Thyroid gland (tissue), 4 donors: ENCODE measurements at regions of chr6 and their contacts with region 1.

Region 1: GRCh38 chr6:29887819-29888776 is 54.2 kb upstream of the HLA-A start:
- DNase-seq: peak; percentile 66 to 89
- H3K4me3 ChIP-seq: peak overlapping the region in 2 of 3 donors; percentile 58 to 71
- H3K27ac ChIP-seq: peak overlapping the region in 2 of 3 donors; percentile 96 to 97
- H3K4me1 ChIP-seq: peaks cover 0 to 10% of the 10 kb centered on the region in 2 donors
- H3K27me3 ChIP-seq: no peaks in the 10 kb centered on the region
- CTCF ChIP-seq: no peak
- POLR2A ChIP-seq: no peak

Region 2: DNA sequence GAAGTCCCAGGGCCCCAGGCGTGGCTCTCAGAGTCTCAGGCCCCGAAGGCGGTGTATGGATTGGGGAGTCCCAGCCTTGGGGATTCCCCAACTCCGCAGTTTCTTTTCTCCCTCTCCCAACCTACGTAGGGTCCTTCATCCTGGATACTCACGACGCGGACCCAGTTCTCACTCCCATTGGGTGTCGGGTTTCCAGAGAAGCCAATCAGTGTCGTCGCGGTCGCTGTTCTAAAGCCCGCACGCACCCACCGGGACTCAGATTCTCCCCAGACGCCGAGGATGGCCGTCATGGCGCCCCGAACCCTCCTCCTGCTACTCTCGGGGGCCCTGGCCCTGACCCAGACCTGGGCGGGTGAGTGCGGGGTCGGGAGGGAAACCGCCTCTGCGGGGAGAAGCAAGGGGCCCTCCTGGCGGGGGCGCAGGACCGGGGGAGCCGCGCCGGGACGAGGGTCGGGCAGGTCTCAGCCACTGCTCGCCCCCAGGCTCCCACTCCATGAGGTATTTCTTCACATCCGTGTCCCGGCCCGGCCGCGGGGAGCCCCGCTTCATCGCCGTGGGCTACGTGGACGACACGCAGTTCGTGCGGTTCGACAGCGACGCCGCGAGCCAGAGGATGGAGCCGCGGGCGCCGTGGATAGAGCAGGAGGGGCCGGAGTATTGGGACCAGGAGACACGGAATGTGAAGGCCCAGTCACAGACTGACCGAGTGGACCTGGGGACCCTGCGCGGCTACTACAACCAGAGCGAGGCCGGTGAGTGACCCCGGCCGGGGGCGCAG is 54.4 kb after region 1 on chr6 and contains the start of gene HLA-A:
- intact Hi-C with region 1: no loop called
- DNase-seq: peak; percentile 92 to 95
- H3K4me3 ChIP-seq: peak within 1 kb of the TSS in 2 of 3 donors; percentile 15 to 71
- H3K27ac ChIP-seq: peak within 1 kb of the TSS; percentile 84 to 87 (median 84)
- H3K4me1 ChIP-seq: peaks cover 0 to 9% of the 10 kb centered on the region in 2 donors
- H3K27me3 ChIP-seq: no peaks in the 10 kb centered on the region
- CTCF ChIP-seq: no peak
- POLR2A ChIP-seq: peak; percentile 69 to 96
- total RNA-seq, gene HLA-A: 398 to 842 (median 578) TPM

Region 3: GRCh38 chr6:29974901-29975560 is 86.9 kb after region 1 on chr6:
- intact Hi-C with region 1: loop called (anchors 5 kb)
- DNase-seq: peak; percentile 20 to 31
- H3K4me3 ChIP-seq: peak overlapping the region in 2 of 3 donors; percentile 2 to 29
- H3K27ac ChIP-seq: peak overlapping the region in 2 of 3 donors; percentile 24 to 32
- H3K4me1 ChIP-seq: peaks cover 13 to 22% of the 10 kb centered on the region in 2 donors
- H3K27me3 ChIP-seq: no peaks in the 10 kb centered on the region
- CTCF ChIP-seq: no peak
- POLR2A ChIP-seq: no peak

Region 4: DNA sequence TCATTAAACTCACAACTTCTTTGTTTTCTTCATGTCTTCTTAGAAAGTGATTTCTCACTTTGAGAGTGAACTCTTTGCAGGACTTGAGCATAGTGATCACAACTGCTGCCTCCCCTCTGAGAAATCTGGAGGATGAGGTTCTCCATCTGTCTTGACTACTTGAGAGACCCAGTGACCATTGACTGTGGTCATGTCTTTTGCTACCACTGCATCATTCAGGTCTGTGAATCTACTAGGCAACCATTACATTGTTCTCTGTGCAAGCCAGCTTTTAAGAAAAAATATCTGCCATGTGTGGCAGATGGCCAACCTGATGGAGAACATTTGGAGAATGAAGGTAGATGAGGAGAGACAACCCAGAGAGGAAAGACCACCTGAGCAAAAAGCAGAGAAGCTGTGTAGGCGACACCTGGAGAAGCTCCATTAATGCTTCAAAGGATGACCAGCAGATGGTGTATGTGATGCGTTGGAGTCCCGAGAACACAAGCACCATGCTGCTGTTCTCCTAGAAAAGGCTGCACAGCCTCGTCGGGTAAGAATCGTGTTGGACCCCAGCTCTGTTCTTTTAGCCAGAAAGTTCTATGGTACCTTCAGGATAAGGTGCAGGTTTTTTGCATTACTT is 350.2 kb after region 1 on chr6:
- intact Hi-C with region 1: no loop called
- DNase-seq: no peak
- H3K4me3 ChIP-seq: no peak overlapping the region
- H3K27ac ChIP-seq: no peak overlapping the region
- H3K4me1 ChIP-seq: no peaks in the 10 kb centered on the region
- H3K27me3 ChIP-seq: no peaks in the 10 kb centered on the region
- CTCF ChIP-seq: no peak
- POLR2A ChIP-seq: no peak